ENCODE measurements at regions of chr16 and their contacts with region 1.

Region 1: GRCh38 chr16:58336332-58337089 is 41.7 kb upstream of the PRSS54 start:
- DNase-seq: peak; percentile 7
- H3K4me3 ChIP-seq: peak overlapping the region; percentile 29; the same call in 1 of the 2 replicates
- CTCF ChIP-seq: peak; percentile 88

Region 2: DNA sequence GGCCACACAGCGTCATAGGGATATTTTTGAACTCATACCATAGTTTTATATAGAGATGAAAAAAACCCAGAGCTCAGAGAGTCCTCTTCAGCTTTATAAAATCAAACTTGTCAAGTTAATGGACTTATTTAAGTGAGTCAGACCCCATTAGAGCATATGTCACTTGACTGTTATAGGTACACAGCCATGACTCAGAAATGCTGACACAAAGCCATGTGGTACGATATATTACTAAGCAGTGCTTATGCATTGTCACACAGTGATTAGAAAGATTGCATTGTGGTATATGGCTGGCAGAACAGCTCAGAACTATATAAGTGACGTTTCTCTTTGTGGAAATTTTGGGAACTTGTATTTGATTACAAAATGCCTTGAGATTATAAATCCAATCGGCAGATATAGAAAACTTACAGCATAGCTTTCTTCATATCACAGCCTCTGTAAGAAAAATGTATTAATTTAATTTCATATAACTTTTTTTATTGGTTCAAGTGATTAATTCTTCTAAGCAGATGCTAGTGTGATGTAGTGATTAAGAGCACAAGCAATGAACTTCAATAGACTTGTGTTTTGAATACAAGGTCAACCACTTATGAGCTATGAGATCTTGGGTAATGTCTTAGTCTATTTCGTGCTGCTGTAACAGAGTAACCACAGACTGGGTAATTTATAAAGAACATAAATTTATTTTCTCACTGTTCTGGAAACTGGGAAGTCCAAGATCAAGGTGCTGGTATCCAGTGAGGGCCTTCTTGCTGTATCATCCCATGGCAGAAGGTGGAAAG is 29.9 kb after region 1 on chr16:
- CTCF ChIA-PET with region 1: interaction called, 10 read pairs
- POLR2A ChIA-PET with region 1: no interaction called
- DNase-seq: no peak
- H3K4me3 ChIP-seq: no peak overlapping the region
- CTCF ChIP-seq: no peak

Region 3: DNA sequence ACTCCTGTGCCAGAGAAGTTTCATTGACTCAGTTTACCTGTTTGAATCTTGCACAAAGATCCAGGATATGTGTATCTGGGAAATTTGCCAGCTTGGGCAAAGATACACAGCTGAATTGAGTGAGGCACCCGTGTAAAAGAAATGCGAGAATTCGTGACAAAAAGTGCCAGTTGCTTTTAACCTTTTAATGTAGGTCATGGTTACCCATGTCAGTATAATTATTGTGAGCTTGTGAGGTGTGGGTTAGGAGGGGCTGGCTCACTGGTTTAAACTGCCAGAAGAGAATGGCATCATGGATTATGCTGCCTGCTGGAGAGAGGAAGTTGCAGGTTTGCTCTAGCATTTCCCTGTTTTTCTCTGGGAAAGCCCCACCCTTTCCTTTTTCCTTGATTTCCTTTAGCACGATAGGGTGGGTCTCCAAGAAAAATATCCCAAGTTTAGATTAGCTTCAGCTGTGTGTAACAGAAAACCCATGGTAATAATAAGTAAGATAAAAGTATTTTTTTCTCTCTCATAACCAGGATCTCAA is 138.6 kb after region 1 on chr16:
- CTCF ChIA-PET with region 1: interaction called, 10 read pairs
- POLR2A ChIA-PET with region 1: no interaction called
- DNase-seq: no peak
- H3K4me3 ChIP-seq: no peak overlapping the region
- CTCF ChIP-seq: no peak

Region 4: DNA sequence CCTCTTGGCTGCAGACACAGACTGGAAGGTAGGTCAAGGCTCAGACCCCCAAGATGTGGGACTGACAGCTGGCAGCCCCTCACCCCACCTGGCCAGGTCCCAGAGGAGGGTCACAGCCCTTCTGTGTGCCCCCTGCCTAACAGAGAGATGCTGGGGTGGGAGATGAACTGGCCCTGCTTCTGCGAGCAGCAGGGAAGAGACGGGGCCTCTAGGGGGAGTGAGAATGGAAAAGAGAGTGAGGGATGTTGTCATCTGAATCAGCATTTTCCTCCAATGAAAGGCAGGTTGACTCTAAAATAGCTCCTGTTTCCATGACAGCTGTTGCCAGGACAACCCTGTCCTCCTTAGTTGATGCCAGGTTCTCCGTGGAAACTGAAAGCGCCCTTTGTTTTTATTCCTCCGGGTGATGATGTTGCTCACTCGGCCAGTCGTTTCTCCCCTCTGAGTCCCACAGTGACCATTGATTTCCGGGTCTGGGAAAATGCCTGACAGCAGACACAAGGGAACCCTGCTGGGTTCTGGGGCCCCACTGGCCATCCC is 158.5 kb after region 1 on chr16:
- CTCF ChIA-PET with region 1: interaction called, 62 read pairs
- POLR2A ChIA-PET with region 1: no interaction called
- DNase-seq: peak; percentile 87
- H3K4me3 ChIP-seq: peak overlapping the region; percentile 19
- CTCF ChIP-seq: peak; percentile 83

Region 5: DNA sequence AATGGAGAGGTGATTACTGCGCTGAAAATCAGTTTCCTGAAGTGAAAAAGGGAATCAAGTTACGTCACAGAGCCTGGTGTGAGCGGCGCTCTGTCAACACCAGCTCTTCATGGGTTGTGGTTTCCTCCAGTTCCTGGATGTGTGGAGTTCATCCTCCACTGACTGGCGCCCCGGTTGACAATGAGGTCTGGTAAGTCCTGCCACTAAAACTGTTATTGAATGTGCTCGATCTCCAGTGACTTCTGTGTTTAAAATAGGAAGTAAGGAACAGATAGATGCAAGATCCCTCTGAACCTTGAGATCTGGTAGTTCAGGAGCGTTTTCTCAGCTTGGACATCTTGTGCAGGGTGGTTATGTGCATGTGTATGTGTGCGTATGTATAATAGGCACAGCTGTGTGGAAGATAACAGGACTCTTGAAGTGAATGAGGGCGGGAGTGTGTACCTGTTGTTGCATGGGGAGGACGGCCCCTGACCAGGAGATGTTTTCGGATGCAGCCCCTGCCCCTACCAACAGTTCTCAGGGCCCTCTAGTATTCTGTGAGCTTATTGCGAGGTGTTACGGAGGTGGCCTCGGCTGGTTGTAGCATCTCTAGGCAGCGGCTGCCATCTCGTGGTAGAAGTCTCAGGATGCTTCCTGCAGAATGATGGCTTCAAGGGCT is 419.6 kb after region 1 on chr16:
- CTCF ChIA-PET with region 1: interaction called, 28 read pairs
- POLR2A ChIA-PET with region 1: no interaction called
- DNase-seq: no peak
- H3K4me3 ChIP-seq: no peak overlapping the region
- CTCF ChIP-seq: peak; percentile 82

Measured in AG04449 (cell line).